GM12878 (cell line): ENCODE measurements at regions of chr2 and their contacts with region 1.

Region 1: GRCh38 chr2:160109936-160110673 is 47.7 kb upstream of the PLA2R1 start:
- DNase-seq: no peak
- ATAC-seq: peak; percentile 84
- H3K4me3 ChIP-seq: no peak overlapping the region
- H3K27ac ChIP-seq: no peak overlapping the region
- H3K4me1 ChIP-seq: peaks cover 13% of the 10 kb centered on the region
- H3K27me3 ChIP-seq: no peaks in the 10 kb centered on the region
- CTCF ChIP-seq: peak; percentile 68 to 87 (median 80)
- EP300 ChIP-seq: no peak
- POLR2A ChIP-seq: no peak
- RAD21 ChIP-seq: peak; percentile 90

Region 2: DNA sequence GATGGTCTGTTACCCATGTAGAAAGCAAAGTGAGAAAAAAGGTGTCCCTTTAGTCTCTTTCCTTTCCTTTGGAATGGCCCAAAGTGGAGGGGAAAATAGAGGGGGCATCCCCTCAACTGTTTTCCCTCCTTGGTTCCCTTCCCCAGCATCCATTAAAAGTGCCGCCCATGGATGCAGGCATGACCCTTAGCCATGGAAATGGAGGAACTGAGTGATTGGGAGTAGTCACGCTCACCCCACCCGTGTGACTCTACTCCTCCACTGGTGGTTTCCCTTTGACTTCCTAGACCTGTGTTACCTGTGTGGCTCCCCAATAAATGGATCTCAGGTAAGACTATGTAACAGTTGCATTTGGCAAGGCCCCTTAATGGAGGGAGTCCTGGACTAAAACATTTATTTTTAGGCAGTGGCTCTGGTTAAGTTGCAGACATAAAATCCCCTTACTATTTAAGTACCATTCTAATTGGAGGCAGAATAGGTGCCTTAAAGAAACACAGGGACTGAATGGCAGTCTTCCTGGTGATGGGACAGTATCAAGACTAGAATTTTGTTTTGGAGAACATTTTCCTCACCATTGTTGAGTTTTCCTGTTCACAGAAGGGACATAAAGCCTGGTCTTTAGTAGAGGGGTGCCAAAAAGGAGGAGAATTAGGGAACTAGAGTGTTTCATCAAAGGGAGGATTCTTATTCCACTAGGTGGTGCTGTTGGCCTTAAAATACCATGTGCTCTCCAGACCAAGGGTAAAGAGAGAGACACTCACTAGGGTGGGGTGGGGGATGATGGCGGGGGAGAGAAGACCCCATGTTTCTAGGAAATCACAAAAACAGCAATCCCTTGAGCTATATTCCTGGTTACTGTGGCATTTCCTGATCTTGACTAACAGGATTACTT is 22.0 kb before region 1 on chr2:
- CTCF ChIA-PET with region 1: interaction called, 19 read pairs
- POLR2A ChIA-PET with region 1: no interaction called
- RAD21 ChIA-PET with region 1: interaction called, 3 read pairs
- SMC1A ChIA-PET with region 1: interaction called, 4 read pairs
- in situ Hi-C with region 1: no loop called
- intact Hi-C with region 1: no loop called
- DNase-seq: no peak
- ATAC-seq: peak; percentile 82
- H3K4me3 ChIP-seq: no peak overlapping the region
- H3K27ac ChIP-seq: no peak overlapping the region
- H3K4me1 ChIP-seq: no peaks in the 10 kb centered on the region
- H3K27me3 ChIP-seq: no peaks in the 10 kb centered on the region
- CTCF ChIP-seq: peak; percentile 20 to 30 (median 21); a peak in 3 of 6 replicates
- EP300 ChIP-seq: no peak
- POLR2A ChIP-seq: no peak
- RAD21 ChIP-seq: peak; percentile 59

Region 3: GRCh38 chr2:160252278-160252887 is 142.3 kb after region 1 on chr2:
- CTCF ChIA-PET with region 1: interaction called, 8 read pairs
- POLR2A ChIA-PET with region 1: no interaction called
- RAD21 ChIA-PET with region 1: interaction called, 3 read pairs
- SMC1A ChIA-PET with region 1: interaction called, 10 read pairs
- in situ Hi-C with region 1: no loop called
- intact Hi-C with region 1: no loop called
- DNase-seq: no peak
- ATAC-seq: no peak
- H3K4me3 ChIP-seq: no peak overlapping the region
- H3K27ac ChIP-seq: no peak overlapping the region
- H3K4me1 ChIP-seq: no peaks in the 10 kb centered on the region
- H3K27me3 ChIP-seq: no peaks in the 10 kb centered on the region; a peak in 3 of 4 replicates
- CTCF ChIP-seq: peak; percentile 55 to 64 (median 63)
- EP300 ChIP-seq: no peak
- POLR2A ChIP-seq: no peak
- RAD21 ChIP-seq: peak; percentile 44

Region 4: DNA sequence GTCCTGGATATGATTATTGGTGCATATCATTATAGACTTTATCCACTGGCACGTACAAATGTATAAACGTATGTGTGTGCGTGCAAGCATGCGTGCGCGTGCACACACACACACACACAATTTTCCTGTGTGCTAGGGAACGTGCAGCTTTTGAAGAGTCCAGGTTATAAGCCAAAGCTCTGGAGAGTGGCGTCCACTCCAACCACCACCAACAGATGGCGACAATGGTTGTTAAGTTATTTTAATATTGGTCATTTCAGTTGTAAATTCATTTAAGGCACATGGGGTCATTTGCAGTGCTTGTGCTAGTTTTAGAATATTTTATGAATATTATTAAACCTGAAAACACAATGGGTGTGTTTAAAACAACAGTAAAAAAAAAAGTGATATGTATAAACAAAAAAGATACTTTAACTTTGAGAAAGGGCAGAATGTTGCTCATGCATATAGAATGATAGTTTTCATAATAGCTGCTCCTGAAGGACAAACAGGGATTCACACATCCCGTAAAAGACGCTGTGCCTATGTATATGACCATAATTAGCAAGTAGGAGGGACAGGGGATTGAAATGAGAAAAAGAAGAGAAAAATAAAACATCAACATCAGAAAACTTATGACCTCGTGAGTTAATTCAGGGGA is 214.2 kb after region 1 on chr2:
- CTCF ChIA-PET with region 1: interaction called, 17 read pairs
- POLR2A ChIA-PET with region 1: no interaction called
- RAD21 ChIA-PET with region 1: interaction called, 11 read pairs
- SMC1A ChIA-PET with region 1: interaction called, 18 read pairs
- in situ Hi-C with region 1: no loop called
- intact Hi-C with region 1: loop called (anchors 5 kb)
- DNase-seq: no peak
- ATAC-seq: peak; percentile 82
- H3K4me3 ChIP-seq: no peak overlapping the region
- H3K27ac ChIP-seq: no peak overlapping the region
- H3K4me1 ChIP-seq: no peaks in the 10 kb centered on the region
- H3K27me3 ChIP-seq: no peaks in the 10 kb centered on the region; a peak in 1 of 4 replicates
- CTCF ChIP-seq: peak; percentile 60 to 72 (median 63)
- EP300 ChIP-seq: no peak
- POLR2A ChIP-seq: no peak
- RAD21 ChIP-seq: peak; percentile 64

Region 5: GRCh38 chr2:160522951-160523710 is 413.0 kb after region 1 on chr2:
- CTCF ChIA-PET with region 1: no interaction called
- POLR2A ChIA-PET with region 1: no interaction called
- RAD21 ChIA-PET with region 1: no interaction called
- SMC1A ChIA-PET with region 1: no interaction called
- in situ Hi-C with region 1: no loop called
- intact Hi-C with region 1: no loop called
- DNase-seq: no peak
- ATAC-seq: no peak
- H3K4me3 ChIP-seq: no peak overlapping the region
- H3K27ac ChIP-seq: no peak overlapping the region
- H3K4me1 ChIP-seq: no peaks in the 10 kb centered on the region
- H3K27me3 ChIP-seq: no peaks in the 10 kb centered on the region
- CTCF ChIP-seq: no peak
- EP300 ChIP-seq: no peak
- POLR2A ChIP-seq: no peak
- RAD21 ChIP-seq: no peak

Region 6: GRCh38 chr2:160970052-160970965 is 860.2 kb after region 1 on chr2:
- CTCF ChIA-PET with region 1: interaction called, 11 read pairs
- POLR2A ChIA-PET with region 1: no interaction called
- RAD21 ChIA-PET with region 1: no interaction called
- SMC1A ChIA-PET with region 1: interaction called, 5 read pairs
- in situ Hi-C with region 1: no loop called
- intact Hi-C with region 1: no loop called
- DNase-seq: no peak
- ATAC-seq: 0 out of 3 replicates have a peak, but pooled peaks have one; percentile 20
- H3K4me3 ChIP-seq: no peak overlapping the region
- H3K27ac ChIP-seq: no peak overlapping the region
- H3K4me1 ChIP-seq: no peaks in the 10 kb centered on the region
- H3K27me3 ChIP-seq: peaks cover 0 to 2% of the 10 kb centered on the region in 2 experiments; a peak in 2 of 4 replicates
- CTCF ChIP-seq: peak; percentile 36 to 50 (median 37); a peak in 4 of 6 replicates
- EP300 ChIP-seq: no peak
- POLR2A ChIP-seq: no peak
- RAD21 ChIP-seq: peak; percentile 58